ENCODE measurements at regions of chr11 and their contacts with region 1.

Region 1: GRCh38 chr11:304915-305843 is 2.4 kb upstream of the IFITM2 start:
- DNase-seq: peak; percentile 64 to 75 (median 67)
- H3K4me3 ChIP-seq: no peak overlapping the region
- H3K4me3 Mint-ChIP-seq: peak overlapping the region in 5 of 8 donors; percentile 36 to 76 (median 52)
- H3K27ac ChIP-seq: peak overlapping the region; percentile 6
- H3K27ac Mint-ChIP-seq: peak overlapping the region; percentile 1 to 89 (median 78)
- H3K4me1 ChIP-seq: peaks cover 42% of the 10 kb centered on the region
- H3K4me1 Mint-ChIP-seq: peaks cover 20 to 58% (median 34%) of the 10 kb centered on the region in 4 donors
- H3K27me3 ChIP-seq: no peaks in the 10 kb centered on the region
- H3K27me3 Mint-ChIP-seq: peaks cover 0 to 3% of the 10 kb centered on the region in 2 donors

Region 2: DNA sequence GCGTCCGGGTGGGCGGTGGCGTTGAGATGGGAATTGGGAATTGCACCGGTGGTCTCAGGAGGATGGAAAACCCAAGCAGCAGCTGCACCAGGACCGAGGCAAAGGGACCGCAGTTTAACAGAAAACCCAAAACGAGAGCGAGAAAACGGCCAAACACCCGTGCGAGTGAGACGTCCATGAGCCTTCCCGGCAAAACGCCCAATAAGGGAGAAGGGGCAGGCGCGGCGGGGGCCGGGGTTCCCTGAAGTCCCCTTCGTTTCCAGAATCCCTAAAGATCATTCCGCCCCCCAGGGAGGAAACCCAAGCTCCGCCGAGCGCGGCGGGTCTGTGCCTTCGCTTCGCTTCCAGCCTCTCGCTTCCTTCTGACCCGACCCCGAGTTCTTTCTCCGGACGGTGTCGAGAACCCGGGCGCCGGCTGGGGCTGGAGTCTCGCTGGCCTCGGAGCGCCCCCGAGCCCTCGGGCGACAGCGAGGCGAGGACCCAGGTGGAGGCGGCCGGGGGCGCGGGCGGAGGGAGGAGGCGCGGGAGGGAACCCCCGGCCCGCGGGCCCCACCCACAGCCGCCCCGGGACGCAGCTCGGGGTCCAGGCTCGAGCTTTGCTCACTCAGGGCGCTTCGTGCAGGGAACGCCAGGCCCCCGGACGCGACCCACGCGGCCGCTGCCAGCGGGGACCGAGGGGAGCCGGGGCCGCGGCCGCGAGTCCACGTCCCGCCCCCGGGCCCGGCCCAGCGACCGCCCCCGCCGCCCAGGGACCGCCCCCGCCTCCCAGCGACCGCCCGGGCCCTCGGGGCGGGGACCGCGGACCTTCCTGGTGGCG is 16.6 kb before region 1 on chr11 and contains the start of gene PGGHG:
- CTCF ChIA-PET with region 1: interaction called, 15 read pairs
- POLR2A ChIA-PET with region 1: interaction called, 37 read pairs
- intact Hi-C with region 1: loop called (anchors 2 kb)
- DNase-seq: peak in 3 of 5 donors; percentile 49 to 60 (median 51)
- H3K4me3 ChIP-seq: peak within 1 kb of the TSS; percentile 83 to 95
- H3K4me3 Mint-ChIP-seq: peak within 1 kb of the TSS; percentile 88 to 99 (median 98)
- H3K27ac ChIP-seq: peak within 1 kb of the TSS; percentile 96
- H3K27ac Mint-ChIP-seq: peak within 1 kb of the TSS; percentile 95 to 100 (median 98)
- H3K4me1 ChIP-seq: peaks cover 38% of the 10 kb centered on the region
- H3K4me1 Mint-ChIP-seq: peaks cover 14 to 51% (median 31%) of the 10 kb centered on the region in 4 donors
- H3K27me3 ChIP-seq: no peaks in the 10 kb centered on the region
- H3K27me3 Mint-ChIP-seq: no peaks in the 10 kb centered on the region
- total RNA-seq, gene PGGHG: 304 TPM

Region 3: GRCh38 chr11:363948-364761 is 59.0 kb after region 1 on chr11:
- CTCF ChIA-PET with region 1: interaction called, 67 read pairs
- POLR2A ChIA-PET with region 1: interaction called, 25 read pairs
- intact Hi-C with region 1: no loop called
- DNase-seq: peak; percentile 61 to 76 (median 72)
- H3K4me3 ChIP-seq: no peak overlapping the region
- H3K4me3 Mint-ChIP-seq: peak overlapping the region in 2 of 8 donors; percentile 12 to 51
- H3K27ac ChIP-seq: no peak overlapping the region
- H3K27ac Mint-ChIP-seq: peak overlapping the region in 2 of 7 donors; percentile 7 to 63
- H3K4me1 ChIP-seq: peaks cover 17% of the 10 kb centered on the region
- H3K4me1 Mint-ChIP-seq: peaks cover 7 to 22% (median 19%) of the 10 kb centered on the region in 4 donors
- H3K27me3 ChIP-seq: peaks cover 22% of the 10 kb centered on the region
- H3K27me3 Mint-ChIP-seq: peaks cover 18 to 20% of the 10 kb centered on the region in 2 donors

Region 4: DNA sequence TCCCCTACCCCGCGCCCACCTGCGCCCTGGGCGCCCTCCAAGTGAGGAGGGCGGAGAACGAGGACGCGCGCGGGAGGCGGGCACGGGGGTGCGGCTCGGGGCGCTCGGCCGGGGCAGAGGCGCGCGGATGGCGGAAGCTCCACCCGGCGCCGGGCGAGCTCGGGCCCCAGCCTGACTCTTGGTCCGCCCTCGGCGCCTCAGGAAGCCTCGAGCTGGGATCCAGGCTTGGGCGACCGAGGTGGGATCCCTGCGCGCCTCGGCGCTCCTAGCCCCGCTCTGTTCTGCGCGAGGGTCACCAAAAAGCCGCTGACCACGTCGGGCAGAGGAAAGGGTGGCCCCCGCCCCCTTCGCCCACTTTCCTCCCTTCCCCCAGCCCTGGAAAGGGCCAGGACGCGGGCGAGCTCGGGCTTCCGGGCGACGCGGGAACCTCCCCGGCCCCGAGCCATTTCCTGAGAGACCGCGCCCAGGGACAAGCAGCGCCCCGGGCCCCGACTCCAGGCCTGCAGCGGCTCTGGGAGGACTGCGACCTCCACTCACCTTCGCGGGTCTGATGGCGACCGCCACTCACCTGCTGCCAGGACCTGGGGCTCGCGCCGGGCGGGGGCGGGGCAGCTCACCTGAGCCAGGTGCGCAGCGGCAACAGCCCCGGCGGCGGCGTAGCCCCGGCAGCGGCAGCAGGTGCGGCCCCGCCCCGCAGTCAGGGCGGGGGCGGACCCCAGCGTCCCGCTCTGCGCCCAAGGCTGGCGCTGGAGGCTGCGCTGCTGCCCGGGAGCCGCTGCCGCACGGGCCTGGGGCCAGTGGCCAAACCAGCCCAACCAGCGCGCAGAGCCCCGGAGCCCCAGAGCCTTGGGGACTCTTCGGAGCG is 111.8 kb after region 1 on chr11:
- CTCF ChIA-PET with region 1: no interaction called
- POLR2A ChIA-PET with region 1: interaction called, 10 read pairs
- intact Hi-C with region 1: no loop called
- DNase-seq: peak in 4 of 5 donors; percentile 38 to 54 (median 45)
- H3K4me3 ChIP-seq: peak overlapping the region; percentile 17 to 73
- H3K4me3 Mint-ChIP-seq: peak overlapping the region; percentile 26 to 100 (median 96)
- H3K27ac ChIP-seq: peak overlapping the region; percentile 61
- H3K27ac Mint-ChIP-seq: peak overlapping the region in 4 of 7 donors; percentile 70 to 92 (median 83)
- H3K4me1 ChIP-seq: peaks cover 31% of the 10 kb centered on the region
- H3K4me1 Mint-ChIP-seq: peaks cover 4 to 42% (median 17%) of the 10 kb centered on the region in 4 donors
- H3K27me3 ChIP-seq: no peaks in the 10 kb centered on the region
- H3K27me3 Mint-ChIP-seq: no peaks in the 10 kb centered on the region

Region 5: GRCh38 chr11:747158-748006 is 442.2 kb after region 1 on chr11 and contains the start of gene TALDO1:
- CTCF ChIA-PET with region 1: no interaction called
- POLR2A ChIA-PET with region 1: no interaction called
- intact Hi-C with region 1: no loop called
- DNase-seq: peak; percentile 62 to 80 (median 65)
- H3K4me3 ChIP-seq: peak within 1 kb of the TSS; percentile 58 to 87
- H3K4me3 Mint-ChIP-seq: peak within 1 kb of the TSS; percentile 82 to 89 (median 87)
- H3K27ac ChIP-seq: peak within 1 kb of the TSS; percentile 67
- H3K27ac Mint-ChIP-seq: peak within 1 kb of the TSS; percentile 79 to 92 (median 86)
- H3K4me1 ChIP-seq: peaks cover 31% of the 10 kb centered on the region
- H3K4me1 Mint-ChIP-seq: peaks cover 11 to 29% (median 21%) of the 10 kb centered on the region in 4 donors
- H3K27me3 ChIP-seq: no peaks in the 10 kb centered on the region
- H3K27me3 Mint-ChIP-seq: no peaks in the 10 kb centered on the region
- total RNA-seq, gene TALDO1: 80.4 to 90.5 TPM